Activated B cell treated with CpG ODN at 0.5 μM for 24 hours (primary cell): ENCODE measurements at regions of chr1 and their contacts with region 1.

Region 1: DNA sequence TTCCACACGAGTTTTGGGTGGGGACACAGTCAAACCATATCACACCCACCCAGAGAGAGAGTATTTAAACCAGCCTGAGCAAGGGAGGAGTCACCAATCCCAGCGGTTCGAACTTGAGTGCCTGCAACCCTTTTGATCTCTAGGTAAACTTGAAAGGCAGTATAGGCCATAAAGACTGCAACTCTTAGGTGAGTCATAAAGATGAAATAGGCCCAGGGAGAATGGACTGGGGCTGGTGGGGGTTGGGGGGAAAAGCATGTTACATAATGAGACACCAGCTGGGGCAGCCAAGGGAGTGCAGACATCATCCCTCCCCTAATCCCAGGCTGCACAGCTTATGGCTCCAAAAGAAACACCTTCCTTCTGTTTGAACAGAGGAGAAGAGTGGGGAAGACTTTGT is 99.8 kb upstream of the LHX8 start:
- DNase-seq: no peak
- ATAC-seq: no peak
- H3K4me3 Mint-ChIP-seq: no peak overlapping the region
- H3K27ac Mint-ChIP-seq: no peak overlapping the region
- H3K4me1 Mint-ChIP-seq: no peaks in the 10 kb centered on the region
- H3K27me3 Mint-ChIP-seq: no peaks in the 10 kb centered on the region
- CTCF ChIP-seq: no peak

Region 2: DNA sequence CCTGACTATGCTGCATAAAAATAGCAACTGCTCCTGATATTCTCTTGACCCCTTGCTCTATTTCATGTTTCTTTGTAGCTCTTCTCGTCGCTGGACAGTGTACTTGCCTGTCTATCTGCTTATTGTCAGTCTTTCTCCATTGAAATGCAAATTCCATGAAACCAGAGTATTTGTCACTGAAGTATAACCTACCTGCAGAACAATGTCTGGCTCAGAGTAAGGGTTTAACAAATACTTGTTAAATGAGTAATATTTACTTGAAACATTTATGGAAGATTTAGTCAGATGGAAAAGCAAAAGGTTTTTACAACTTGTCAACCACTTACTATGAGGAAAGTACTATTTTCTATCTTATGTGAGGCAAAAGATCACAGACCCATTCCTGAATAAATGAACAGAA is 340.9 kb before region 1 on chr1:
- CTCF ChIA-PET with region 1: no interaction called
- POLR2A ChIA-PET with region 1: no interaction called
- intact Hi-C with region 1: no loop called
- DNase-seq: no peak
- ATAC-seq: no peak
- H3K4me3 Mint-ChIP-seq: no peak overlapping the region
- H3K27ac Mint-ChIP-seq: no peak overlapping the region
- H3K4me1 Mint-ChIP-seq: no peaks in the 10 kb centered on the region
- H3K27me3 Mint-ChIP-seq: no peaks in the 10 kb centered on the region
- CTCF ChIP-seq: no peak

Region 3: DNA sequence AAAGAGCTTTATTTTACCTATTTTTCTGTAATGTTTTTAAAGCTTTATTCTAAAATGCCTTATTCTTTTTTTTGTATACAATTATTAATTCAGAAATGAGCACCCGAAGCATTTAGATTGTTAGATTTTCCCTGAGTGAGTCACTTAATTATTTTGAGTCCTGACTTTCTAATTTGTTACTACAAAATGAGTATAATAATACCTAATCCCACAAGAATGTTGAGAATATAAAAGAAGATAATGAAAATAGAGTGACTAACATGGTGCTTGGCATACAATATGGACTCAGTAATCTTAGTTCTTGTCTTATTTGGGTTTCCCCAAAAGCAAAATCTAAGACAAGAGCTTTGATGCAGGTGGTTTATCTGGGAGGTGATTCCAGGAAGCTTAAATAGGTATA is 242.0 kb after region 1 on chr1:
- CTCF ChIA-PET with region 1: no interaction called
- POLR2A ChIA-PET with region 1: no interaction called
- intact Hi-C with region 1: loop called (anchors 5 kb)
- DNase-seq: no peak
- ATAC-seq: no peak
- H3K4me3 Mint-ChIP-seq: no peak overlapping the region
- H3K27ac Mint-ChIP-seq: no peak overlapping the region
- H3K4me1 Mint-ChIP-seq: no peaks in the 10 kb centered on the region
- H3K27me3 Mint-ChIP-seq: no peaks in the 10 kb centered on the region
- CTCF ChIP-seq: no peak